ENCODE measurements at regions of chr17 and their contacts with region 1.

Region 1: GRCh38 chr17:34146440-34147043 is 108.5 kb upstream of the CCL2 start:
- DNase-seq: peak; percentile 21
- ATAC-seq: no peak
- H3K4me3 Mint-ChIP-seq: no peak overlapping the region
- H3K27ac Mint-ChIP-seq: no peak overlapping the region
- H3K4me1 Mint-ChIP-seq: no peaks in the 10 kb centered on the region
- H3K27me3 Mint-ChIP-seq: peaks cover 7% of the 10 kb centered on the region
- CTCF ChIP-seq: no peak

Region 2: DNA sequence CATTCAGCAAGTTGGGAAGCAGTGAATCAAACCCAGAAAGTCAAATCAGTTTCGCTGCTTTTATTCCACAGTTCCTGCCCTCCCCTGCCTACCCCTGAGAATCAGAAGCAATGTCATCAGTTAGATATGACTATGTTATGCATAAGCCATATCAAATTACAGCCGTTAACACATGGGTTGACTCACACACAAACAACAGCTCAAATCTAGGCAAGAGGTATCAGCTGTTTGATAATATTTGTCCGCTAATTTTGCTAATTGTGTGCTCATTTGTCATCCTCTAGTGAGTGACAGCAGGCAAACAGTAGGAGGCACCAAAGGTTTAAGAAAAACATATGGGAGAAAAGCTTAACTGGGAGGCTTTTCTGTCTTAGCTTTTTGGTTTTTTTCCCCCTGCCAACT is 218.8 kb before region 1 on chr17:
- CTCF ChIA-PET with region 1: interaction called, 10 read pairs
- POLR2A ChIA-PET with region 1: no interaction called
- intact Hi-C with region 1: no loop called
- DNase-seq: no peak
- ATAC-seq: no peak
- H3K4me3 Mint-ChIP-seq: no peak overlapping the region
- H3K27ac Mint-ChIP-seq: no peak overlapping the region
- H3K4me1 Mint-ChIP-seq: no peaks in the 10 kb centered on the region
- H3K27me3 Mint-ChIP-seq: peaks cover 10% of the 10 kb centered on the region
- CTCF ChIP-seq: no peak

Measured in activated B cell treated with CpG ODN at 0.5 μM for 24 hours (primary cell).